A549 (cell line): ENCODE measurements at regions of chrX and their contacts with region 1.

Region 1: DNA sequence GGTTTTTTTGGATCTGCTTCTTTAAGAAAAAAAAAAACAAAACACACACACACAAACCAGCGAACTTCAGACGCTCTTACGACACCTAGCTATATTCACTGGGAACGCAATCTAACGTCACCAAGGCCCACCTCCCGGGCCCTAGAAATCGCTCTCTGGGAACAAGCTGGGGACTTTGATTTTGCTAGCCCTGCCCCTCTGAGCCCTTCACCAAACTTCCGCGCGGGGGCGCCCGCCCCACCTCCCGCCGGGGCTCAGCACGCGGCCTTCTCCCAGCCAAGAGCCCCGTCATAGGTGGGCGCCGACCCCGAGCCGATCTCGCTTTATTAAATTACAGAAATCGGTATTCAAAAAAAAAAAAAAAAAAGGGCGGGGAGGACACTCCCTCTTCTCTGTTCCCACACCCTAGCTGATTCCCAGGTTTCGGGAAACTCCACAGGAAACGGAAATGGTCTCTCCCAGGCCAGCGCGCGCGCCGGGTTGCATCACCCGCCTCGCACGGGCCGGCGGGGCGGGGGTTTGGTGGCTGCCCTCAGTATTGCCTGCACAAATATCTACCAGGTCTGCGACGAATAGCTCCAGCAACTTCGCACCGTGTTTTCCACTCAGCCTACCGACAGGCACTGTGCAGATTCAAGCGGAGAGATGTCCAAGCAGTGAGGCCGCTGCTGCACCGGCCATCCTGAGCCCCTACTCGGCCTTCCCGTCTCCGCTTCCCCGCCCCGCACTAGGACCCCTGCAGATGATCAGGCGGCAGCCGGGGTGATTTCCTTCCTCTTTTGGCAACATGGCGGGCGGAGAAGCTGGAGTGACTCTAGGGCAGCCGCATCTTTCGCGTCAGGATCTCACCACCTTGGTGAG is at the start of gene EIF2S3:
- DNase-seq: peak; percentile 77 to 98
- ATAC-seq: peak; percentile 94 to 98
- H3K4me3 ChIP-seq: no peak within 1 kb of the TSS
- H3K27ac ChIP-seq: no peak within 1 kb of the TSS
- H3K4me1 ChIP-seq: peaks cover 9% of the 10 kb centered on the region; the same call in 1 of the 3 replicates
- CTCF ChIP-seq: peak; percentile 71
- EP300 ChIP-seq: no peak
- POLR2A ChIP-seq: peak; percentile 67
- RAD21 ChIP-seq: peak; percentile 41 to 46; a peak in 4 of 5 replicates
- polyA plus RNA-seq, gene EIF2S3: 214 and 219 TPM in 2 replicates

Region 2: DNA sequence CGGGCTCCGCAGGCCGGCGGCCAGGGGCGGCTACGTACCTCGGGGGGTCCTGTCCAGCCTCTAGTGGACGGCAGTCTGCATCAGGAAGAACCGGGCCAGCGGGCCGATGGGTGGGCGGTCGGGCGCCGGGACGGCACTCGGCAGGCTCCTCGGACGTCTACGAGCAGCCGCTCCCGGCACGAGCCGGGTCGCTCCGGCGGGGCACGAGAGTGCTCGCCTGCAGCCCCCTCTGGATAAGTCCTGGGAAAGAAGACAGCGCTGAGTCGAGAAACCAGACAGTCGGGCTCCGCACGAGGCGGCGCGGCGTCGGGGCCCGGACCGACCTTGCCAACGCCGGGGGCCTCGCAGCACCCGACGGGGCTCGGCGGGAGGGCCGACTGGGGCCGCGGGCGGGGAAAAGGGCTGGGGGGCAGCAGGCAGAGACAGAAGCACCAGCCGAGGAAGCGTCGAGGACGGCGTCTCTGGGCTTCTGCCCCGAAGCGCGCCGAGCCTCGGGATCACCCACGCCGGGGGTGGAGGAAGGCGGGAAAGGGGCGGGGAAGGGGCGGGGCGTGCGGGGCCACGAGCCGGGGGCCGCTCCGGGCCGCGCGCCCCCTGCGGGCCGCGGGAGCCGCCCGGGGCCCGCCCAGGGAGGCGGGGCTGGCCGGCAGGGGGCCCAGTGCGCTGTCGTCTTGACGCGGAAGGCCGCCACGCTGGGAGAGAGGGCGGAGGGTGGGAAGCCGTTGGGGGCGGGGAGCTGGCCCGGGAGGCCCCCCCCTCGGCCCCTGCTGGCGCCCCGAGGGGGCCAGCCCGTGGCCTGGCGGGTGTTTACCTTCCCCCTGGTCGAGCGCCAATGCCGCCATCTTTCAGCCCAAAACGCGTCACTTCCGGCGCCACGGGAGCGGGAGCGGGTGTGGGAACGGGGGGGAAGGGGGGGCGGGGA is 29.3 kb before region 1 on chrX:
- CTCF ChIA-PET with region 1: interaction called, 30 read pairs
- POLR2A ChIA-PET with region 1: interaction called, 80 read pairs
- DNase-seq: peak; percentile 73 to 93
- ATAC-seq: peak; percentile 84 to 89
- H3K4me3 ChIP-seq: peak overlapping the region; percentile 95
- H3K27ac ChIP-seq: peak overlapping the region; percentile 99
- H3K4me1 ChIP-seq: peaks cover 24% of the 10 kb centered on the region
- CTCF ChIP-seq: peak; percentile 44
- EP300 ChIP-seq: peak in 1 of 2 experiments; percentile 63; a peak in 2 of 5 replicates
- POLR2A ChIP-seq: peak; percentile 98
- RAD21 ChIP-seq: no peak; a peak in 2 of 5 replicates

Region 3: DNA sequence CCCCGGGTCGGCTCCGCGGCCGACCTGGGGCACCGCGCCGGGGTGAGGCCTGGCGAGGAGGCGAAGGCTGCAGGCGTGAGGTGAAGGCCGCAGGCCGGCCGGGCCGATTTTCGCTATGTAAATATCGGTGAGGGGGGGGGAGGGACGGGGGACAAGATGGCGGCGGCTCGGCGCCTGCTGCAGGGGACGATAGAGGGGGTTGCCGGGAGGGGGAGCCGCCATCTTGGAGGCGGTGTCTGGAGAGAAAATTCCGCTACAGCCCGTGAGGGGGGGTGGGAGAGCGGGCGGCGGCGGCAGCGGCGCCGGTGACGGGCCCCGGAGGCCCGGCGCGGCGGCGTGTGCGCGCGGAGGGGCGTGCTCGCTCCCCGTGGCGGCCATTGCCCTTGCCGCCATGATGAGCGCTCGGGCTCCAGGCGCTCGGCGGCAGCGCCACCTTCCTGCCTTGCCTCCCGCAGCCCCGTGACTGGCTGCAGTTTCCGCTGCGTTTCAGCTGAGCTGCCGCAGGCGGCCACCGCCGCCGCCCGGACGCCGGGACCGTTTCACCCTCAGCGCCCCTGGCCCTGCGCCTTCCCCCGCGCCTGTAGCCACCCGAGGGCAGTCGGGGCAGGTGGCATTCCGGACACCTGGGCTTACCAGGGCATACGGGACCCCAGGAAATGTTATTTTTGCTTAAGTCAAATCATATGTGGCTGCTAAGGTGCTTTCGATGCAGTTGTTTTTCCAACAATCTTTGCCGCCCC is 95.8 kb after region 1 on chrX:
- CTCF ChIA-PET with region 1: interaction called, 4 read pairs
- POLR2A ChIA-PET with region 1: interaction called, 12 read pairs
- DNase-seq: peak; percentile 78 to 94
- ATAC-seq: peak; percentile 75 to 79
- H3K4me3 ChIP-seq: peak overlapping the region; percentile 85
- H3K27ac ChIP-seq: peak overlapping the region; percentile 98 to 100
- H3K4me1 ChIP-seq: peaks cover 61% of the 10 kb centered on the region
- CTCF ChIP-seq: peak; percentile 41
- EP300 ChIP-seq: no peak
- POLR2A ChIP-seq: peak; percentile 40
- RAD21 ChIP-seq: peak; percentile 37 to 66; a peak in 4 of 5 replicates